Calu3 (cell line): ENCODE measurements at regions of chr16 and their contacts with region 1.

Region 1: DNA sequence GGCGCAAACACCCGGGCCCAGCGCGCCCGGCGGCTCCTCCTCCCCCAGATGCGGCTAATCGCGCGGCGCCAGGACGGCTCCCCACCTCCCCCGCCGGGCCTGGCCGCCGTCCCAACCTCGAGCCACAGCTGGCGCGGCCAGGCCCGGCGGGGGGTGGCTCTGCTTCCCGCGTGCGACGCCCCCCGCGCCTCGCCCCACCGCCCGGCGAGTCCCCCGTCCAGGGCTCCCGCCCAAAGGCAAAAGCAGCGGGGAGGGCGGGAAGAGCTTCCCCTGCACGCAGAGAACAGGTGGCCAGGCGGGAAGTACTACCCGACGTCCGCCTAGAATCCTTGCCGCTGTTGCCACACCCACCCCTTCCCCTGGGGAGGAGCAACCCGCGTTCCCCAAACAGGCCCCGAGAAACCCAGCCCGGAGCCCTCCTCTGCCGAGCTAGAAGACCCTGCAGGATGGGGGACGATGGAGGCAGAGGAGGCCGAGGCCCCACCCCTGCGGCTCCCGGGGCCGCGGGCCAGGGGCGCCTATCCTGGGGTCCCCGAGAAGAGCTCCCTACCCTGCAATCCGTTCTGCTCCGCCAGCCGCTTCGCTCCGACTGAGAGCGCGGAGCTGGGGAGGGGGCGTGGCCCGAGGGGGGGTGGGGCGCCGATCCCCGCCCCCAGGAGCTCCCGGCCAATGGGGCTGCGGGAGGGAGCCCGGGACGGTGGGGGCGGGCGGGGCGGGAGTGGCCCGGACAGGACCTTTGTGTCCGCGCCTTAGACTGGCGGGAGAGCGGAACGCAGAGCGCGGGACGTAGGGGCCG is at the start of gene CARHSP1:
- DNase-seq: peak; percentile 96
- H3K4me3 Mint-ChIP-seq: peak within 1 kb of the TSS; percentile 86
- H3K27ac Mint-ChIP-seq: peak within 1 kb of the TSS; percentile 79
- H3K4me1 Mint-ChIP-seq: peaks cover 65% of the 10 kb centered on the region
- H3K27me3 Mint-ChIP-seq: no peaks in the 10 kb centered on the region
- CTCF ChIP-seq: no peak
- total RNA-seq, gene CARHSP1: 89.2 and 104 TPM in 2 replicates

Region 2: GRCh38 chr16:8818504-8819270 is 49.9 kb before region 1 on chr16:
- CTCF ChIA-PET with region 1: no interaction called
- intact Hi-C with region 1: no loop called
- DNase-seq: no peak
- H3K4me3 Mint-ChIP-seq: no peak overlapping the region
- H3K27ac Mint-ChIP-seq: no peak overlapping the region
- H3K4me1 Mint-ChIP-seq: no peaks in the 10 kb centered on the region
- H3K27me3 Mint-ChIP-seq: no peaks in the 10 kb centered on the region
- CTCF ChIP-seq: no peak

Region 3: DNA sequence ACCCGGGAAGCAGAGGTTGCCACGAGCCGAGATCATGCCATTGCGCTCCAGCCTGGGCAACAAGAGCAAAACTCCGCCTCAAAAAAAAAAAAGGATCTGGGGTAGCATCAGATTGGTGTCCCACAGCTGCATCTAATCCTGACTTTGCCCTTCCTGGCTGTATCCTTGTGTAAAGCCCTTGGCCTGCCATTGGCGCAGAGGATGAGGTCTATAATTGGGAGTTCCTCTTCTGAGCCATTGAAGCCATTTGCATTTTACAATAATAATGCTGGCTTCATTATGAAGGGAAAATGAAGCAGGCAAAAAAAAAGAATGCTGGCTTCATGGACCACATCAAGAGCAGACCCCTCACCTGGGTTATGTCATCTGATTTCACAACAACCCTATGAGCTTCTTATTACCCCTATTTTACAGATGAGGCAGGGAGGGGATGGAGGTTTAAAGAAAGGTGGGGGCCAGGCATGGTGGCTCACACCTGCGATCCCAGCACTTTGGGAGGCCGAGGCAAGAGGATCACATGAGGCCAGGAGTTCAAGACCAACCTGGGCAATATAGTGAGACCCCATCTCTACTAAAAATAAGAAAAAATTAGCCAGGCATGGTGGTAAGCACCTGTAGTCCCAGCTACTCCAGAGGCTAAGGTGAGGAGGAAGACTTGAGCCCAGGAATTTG is 12.4 kb after region 1 on chr16:
- CTCF ChIA-PET with region 1: interaction called, 18 read pairs
- intact Hi-C with region 1: no loop called
- DNase-seq: no peak
- H3K4me3 Mint-ChIP-seq: no peak overlapping the region
- H3K27ac Mint-ChIP-seq: no peak overlapping the region
- H3K4me1 Mint-ChIP-seq: peaks cover 29% of the 10 kb centered on the region
- H3K27me3 Mint-ChIP-seq: no peaks in the 10 kb centered on the region
- CTCF ChIP-seq: no peak